ENCODE measurements at regions of chr12 and their contacts with region 1.

Region 1: GRCh38 chr12:62192180-62192902 is 67.9 kb upstream of the USP15 start:
- DNase-seq: peak; percentile 75
- H3K4me3 ChIP-seq: peak overlapping the region; percentile 40 to 52 (median 52)
- H3K27ac ChIP-seq: peak overlapping the region; percentile 60
- H3K4me1 ChIP-seq: peaks cover 44% of the 10 kb centered on the region
- H3K27me3 ChIP-seq: peaks cover 13% of the 10 kb centered on the region
- CTCF ChIP-seq: peak; percentile 61 to 74

Region 2: DNA sequence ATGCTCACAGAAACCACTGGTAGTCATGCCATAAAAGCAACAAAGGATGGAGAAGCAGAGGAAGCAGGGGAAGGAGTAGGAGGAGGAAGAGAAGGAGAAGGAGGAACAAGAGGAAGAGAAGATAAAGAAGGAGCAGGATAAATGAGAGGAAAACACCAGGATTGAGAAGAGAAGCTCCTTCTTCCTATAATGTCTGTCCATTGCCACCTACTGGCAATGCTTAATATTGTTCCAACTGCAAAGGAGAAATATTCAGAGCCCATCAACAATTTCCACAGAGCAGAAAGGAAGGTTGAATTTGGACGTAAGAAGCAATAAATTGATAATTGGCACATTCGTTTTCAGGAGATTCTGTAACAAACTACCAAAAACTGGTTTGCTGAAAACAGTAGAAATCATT is 1698.1 kb before region 1 on chr12:
- CTCF ChIA-PET with region 1: no interaction called
- dilution Hi-C with region 1: no loop called
- in situ Hi-C with region 1: no loop called
- intact Hi-C with region 1: loop called (anchors 10 kb)
- DNase-seq: peak; percentile 37
- H3K4me3 ChIP-seq: no peak overlapping the region
- H3K27ac ChIP-seq: no peak overlapping the region
- H3K4me1 ChIP-seq: no peaks in the 10 kb centered on the region
- H3K27me3 ChIP-seq: no peaks in the 10 kb centered on the region
- CTCF ChIP-seq: peak; percentile 70

Region 3: DNA sequence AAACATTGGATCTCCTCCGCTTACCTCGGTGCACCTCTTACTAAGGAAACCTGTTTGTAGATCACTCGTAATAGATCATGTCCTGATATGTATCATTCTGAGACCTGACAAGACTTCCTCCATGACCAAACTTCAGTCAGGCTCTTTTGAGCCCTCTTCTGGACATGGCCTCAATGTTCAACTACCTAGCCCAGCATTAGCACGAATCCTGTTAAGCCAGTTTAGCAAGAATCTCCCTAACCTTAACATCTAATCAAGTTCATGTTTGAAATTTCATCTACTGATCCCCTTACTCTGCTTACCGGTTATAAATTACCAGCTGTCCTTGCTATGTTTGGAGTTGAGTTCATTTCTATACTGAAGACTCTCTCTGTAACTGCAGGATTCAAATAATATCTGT is 646.0 kb before region 1 on chr12:
- CTCF ChIA-PET with region 1: no interaction called
- dilution Hi-C with region 1: no loop called
- in situ Hi-C with region 1: no loop called
- intact Hi-C with region 1: loop called (anchors 1 kb)
- DNase-seq: peak; percentile 57
- H3K4me3 ChIP-seq: no peak overlapping the region
- H3K27ac ChIP-seq: no peak overlapping the region
- H3K4me1 ChIP-seq: no peaks in the 10 kb centered on the region
- H3K27me3 ChIP-seq: no peaks in the 10 kb centered on the region
- CTCF ChIP-seq: peak; percentile 23 to 52

Region 4: GRCh38 chr12:62006076-62006732 is 186.1 kb before region 1 on chr12:
- CTCF ChIA-PET with region 1: no interaction called
- dilution Hi-C with region 1: no loop called
- in situ Hi-C with region 1: no loop called
- intact Hi-C with region 1: loop called (anchors 1 kb)
- DNase-seq: peak; percentile 11
- H3K4me3 ChIP-seq: no peak overlapping the region
- H3K27ac ChIP-seq: no peak overlapping the region
- H3K4me1 ChIP-seq: no peaks in the 10 kb centered on the region
- H3K27me3 ChIP-seq: no peaks in the 10 kb centered on the region
- CTCF ChIP-seq: peak; percentile 74 to 76

Region 5: DNA sequence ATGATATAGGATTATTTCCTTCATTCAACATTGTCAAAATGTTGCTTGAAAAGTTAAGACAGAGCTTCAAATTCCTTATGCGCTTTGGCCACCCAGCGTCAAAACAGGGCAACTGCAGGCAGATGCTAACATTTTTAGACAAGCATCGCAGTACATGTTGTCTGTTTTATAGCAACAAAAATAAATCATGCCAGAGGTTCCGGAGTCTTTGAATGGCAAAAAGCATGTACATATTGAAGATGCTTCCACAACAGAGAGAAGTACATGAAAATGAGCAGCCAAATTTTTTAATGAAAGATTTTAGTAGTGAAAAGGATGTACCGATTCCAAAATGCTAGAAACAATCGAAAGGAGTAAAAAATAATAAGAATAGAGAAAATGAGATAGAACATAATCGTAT is 18.1 kb after region 1 on chr12:
- CTCF ChIA-PET with region 1: no interaction called
- dilution Hi-C with region 1: no loop called
- in situ Hi-C with region 1: no loop called
- intact Hi-C with region 1: loop called (anchors 1 kb)
- DNase-seq: no peak
- H3K4me3 ChIP-seq: no peak overlapping the region
- H3K27ac ChIP-seq: no peak overlapping the region
- H3K4me1 ChIP-seq: peaks cover 6% of the 10 kb centered on the region
- H3K27me3 ChIP-seq: no peaks in the 10 kb centered on the region
- CTCF ChIP-seq: peak; percentile 90 to 91

Region 6: GRCh38 chr12:62273724-62274380 is 81.5 kb after region 1 on chr12:
- CTCF ChIA-PET with region 1: no interaction called
- dilution Hi-C with region 1: no loop called
- in situ Hi-C with region 1: no loop called
- intact Hi-C with region 1: no loop called
- DNase-seq: no peak
- H3K4me3 ChIP-seq: no peak overlapping the region
- H3K27ac ChIP-seq: no peak overlapping the region
- H3K4me1 ChIP-seq: peaks cover 8% of the 10 kb centered on the region
- H3K27me3 ChIP-seq: no peaks in the 10 kb centered on the region
- CTCF ChIP-seq: no peak